Activated CD4-positive, alpha-beta T cell treated with anti-CD3 and anti-CD28 coated beads, Interleukin-2, amount 10 ng/mL, durations not matched to agents 7 days and 5 days (primary cell): ENCODE measurements at regions of chr1 and their contacts with region 1.

Region 1: GRCh38 chr1:108691942-108692723 is at the start of gene PRPF38B:
- DNase-seq: peak; percentile 96
- H3K4me3 Mint-ChIP-seq: peak within 1 kb of the TSS; percentile 96
- H3K27ac Mint-ChIP-seq: peak within 1 kb of the TSS; percentile 99
- H3K4me1 Mint-ChIP-seq: peaks cover 40% of the 10 kb centered on the region
- H3K27me3 Mint-ChIP-seq: peaks cover 8% of the 10 kb centered on the region
- total RNA-seq, gene PRPF38B: 76.4 to 79.8 TPM

Region 2: GRCh38 chr1:108643492-108644335 is 48.4 kb before region 1 on chr1:
- CTCF ChIA-PET with region 1: interaction called, 13 read pairs
- POLR2A ChIA-PET with region 1: interaction called, 24 read pairs
- DNase-seq: peak; percentile 74
- H3K4me3 Mint-ChIP-seq: no peak overlapping the region
- H3K27ac Mint-ChIP-seq: peak overlapping the region; percentile 97
- H3K4me1 Mint-ChIP-seq: peaks cover 74% of the 10 kb centered on the region
- H3K27me3 Mint-ChIP-seq: no peaks in the 10 kb centered on the region

Region 3: GRCh38 chr1:108661030-108661620 is 31.0 kb before region 1 on chr1 and contains the start of gene HENMT1:
- CTCF ChIA-PET with region 1: interaction called, 7 read pairs
- POLR2A ChIA-PET with region 1: interaction called, 19 read pairs
- DNase-seq: peak; percentile 81
- H3K4me3 Mint-ChIP-seq: peak within 1 kb of the TSS; percentile 79
- H3K27ac Mint-ChIP-seq: peak within 1 kb of the TSS; percentile 97
- H3K4me1 Mint-ChIP-seq: peaks cover 47% of the 10 kb centered on the region
- H3K27me3 Mint-ChIP-seq: no peaks in the 10 kb centered on the region
- total RNA-seq, gene HENMT1: 22.7 to 23.6 TPM

Region 4: GRCh38 chr1:108679582-108680213 is 12.4 kb before region 1 on chr1:
- CTCF ChIA-PET with region 1: interaction called, 20 read pairs
- POLR2A ChIA-PET with region 1: interaction called, 4 read pairs
- DNase-seq: no peak
- H3K4me3 Mint-ChIP-seq: no peak overlapping the region
- H3K27ac Mint-ChIP-seq: peak overlapping the region; percentile 37
- H3K4me1 Mint-ChIP-seq: peaks cover 14% of the 10 kb centered on the region
- H3K27me3 Mint-ChIP-seq: peaks cover 5% of the 10 kb centered on the region

Region 5: GRCh38 chr1:108708691-108709660 is 16.8 kb after region 1 on chr1:
- CTCF ChIA-PET with region 1: interaction called, 14 read pairs
- POLR2A ChIA-PET with region 1: interaction called, 5 read pairs
- DNase-seq: peak; percentile 62
- H3K4me3 Mint-ChIP-seq: no peak overlapping the region
- H3K27ac Mint-ChIP-seq: no peak overlapping the region
- H3K4me1 Mint-ChIP-seq: peaks cover 32% of the 10 kb centered on the region
- H3K27me3 Mint-ChIP-seq: peaks cover 10% of the 10 kb centered on the region